Common myeloid progenitor, CD34-positive (primary cell): ENCODE measurements at regions of chr6 and their contacts with region 1.

Region 1: DNA sequence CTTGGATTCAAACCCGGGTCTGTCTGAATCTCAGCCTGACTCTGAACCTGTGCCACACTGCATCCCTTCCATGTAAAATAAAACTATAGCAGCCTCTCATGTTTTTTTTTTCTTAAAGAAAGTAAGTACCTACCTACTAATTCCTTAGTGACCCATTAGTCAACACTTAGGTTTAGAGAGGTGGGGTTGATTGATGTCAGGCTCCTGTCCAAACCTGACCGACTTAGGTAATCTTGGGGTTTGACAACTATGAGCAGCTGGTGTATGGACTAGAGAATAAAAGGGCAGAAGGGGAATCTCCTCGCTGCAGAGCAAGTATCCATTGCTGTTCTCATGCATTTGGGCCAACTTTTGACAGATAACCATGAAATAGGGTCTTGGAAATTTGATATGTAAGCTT is 6.5 kb downstream of the NKAIN2 start:
- DNase-seq: no peak
- H3K4me3 ChIP-seq: no peak overlapping the region
- H3K27ac ChIP-seq: no peak overlapping the region
- H3K4me1 ChIP-seq: peaks cover 12 to 64% (median 35%) of the 10 kb centered on the region in 4 experiments
- H3K27me3 ChIP-seq: no peaks in the 10 kb centered on the region

Region 2: GRCh38 chr6:123965894-123966293 is 155.7 kb after region 1 on chr6:
- CTCF ChIA-PET with region 1: interaction called, 124 read pairs
- POLR2A ChIA-PET with region 1: no interaction called
- DNase-seq: peak; percentile 70 to 77 (median 76)
- H3K4me3 ChIP-seq: no peak overlapping the region
- H3K27ac ChIP-seq: no peak overlapping the region
- H3K4me1 ChIP-seq: peaks cover under 1 to 32% (median 13%) of the 10 kb centered on the region in 4 experiments
- H3K27me3 ChIP-seq: no peaks in the 10 kb centered on the region